HepG2 (cell line): ENCODE measurements at regions of chr18 and their contacts with region 1.

Region 1: GRCh38 chr18:4391859-4392258 is 63.2 kb downstream of the DLGAP1 start:
- DNase-seq: no peak
- ATAC-seq: no peak
- H3K4me3 ChIP-seq: no peak overlapping the region
- H3K27ac ChIP-seq: no peak overlapping the region
- H3K4me1 ChIP-seq: no peaks in the 10 kb centered on the region
- H3K27me3 ChIP-seq: peaks cover 0 to 2% of the 10 kb centered on the region in 2 experiments; a peak in 2 of 5 replicates
- CTCF ChIP-seq: no peak
- EP300 ChIP-seq: no peak
- POLR2A ChIP-seq: no peak
- RAD21 ChIP-seq: no peak

Region 2: GRCh38 chr18:4017480-4017879 is 374.4 kb before region 1 on chr18:
- CTCF ChIA-PET with region 1: no interaction called
- POLR2A ChIA-PET with region 1: no interaction called
- in situ Hi-C with region 1: no loop called
- intact Hi-C with region 1: loop called (anchors 10 kb)
- DNase-seq: no peak
- ATAC-seq: peak; percentile 49; the same call in 2 of the 3 replicates
- H3K4me3 ChIP-seq: no peak overlapping the region
- H3K27ac ChIP-seq: no peak overlapping the region
- H3K4me1 ChIP-seq: no peaks in the 10 kb centered on the region
- H3K27me3 ChIP-seq: peaks cover 0 to 8% of the 10 kb centered on the region in 2 experiments; a peak in 1 of 5 replicates
- CTCF ChIP-seq: no peak
- EP300 ChIP-seq: no peak
- POLR2A ChIP-seq: no peak
- RAD21 ChIP-seq: no peak